K562 (cell line): ENCODE measurements at regions of chrX and their contacts with region 1.

Region 1: GRCh38 chrX:118839334-118839958 is 15.8 kb downstream of the ZCCHC12 start:
- DNase-seq: peak; percentile 72 to 80 (median 76)
- ATAC-seq: peak; percentile 97
- H3K4me3 ChIP-seq: peak overlapping the region; percentile 28
- H3K27ac ChIP-seq: no peak overlapping the region
- H3K4me1 ChIP-seq: peaks cover 0 to 7% of the 10 kb centered on the region in 2 experiments; a peak in 2 of 5 replicates
- H3K27me3 ChIP-seq: no peaks in the 10 kb centered on the region; a peak in 1 of 5 replicates
- CTCF ChIP-seq: peak; percentile 64 to 75 (median 73)
- EP300 ChIP-seq: no peak
- POLR2A ChIP-seq: no peak
- RAD21 ChIP-seq: peak; percentile 32 to 57

Region 2: GRCh38 chrX:119067023-119067739 is 227.7 kb after region 1 on chrX:
- CTCF ChIA-PET with region 1: interaction called, 10 read pairs
- POLR2A ChIA-PET with region 1: no interaction called
- in situ Hi-C with region 1: loop called (anchors 5 kb)
- intact Hi-C with region 1: no loop called
- DNase-seq: peak; percentile 53 to 63 (median 62)
- ATAC-seq: peak; percentile 83
- H3K4me3 ChIP-seq: no peak overlapping the region
- H3K27ac ChIP-seq: no peak overlapping the region
- H3K4me1 ChIP-seq: peaks cover 0 to 9% of the 10 kb centered on the region in 2 experiments; a peak in 3 of 5 replicates
- H3K27me3 ChIP-seq: peaks cover 0 to 4% of the 10 kb centered on the region in 2 experiments; a peak in 1 of 5 replicates
- CTCF ChIP-seq: peak; percentile 70 to 81 (median 78)
- EP300 ChIP-seq: no peak
- POLR2A ChIP-seq: no peak
- RAD21 ChIP-seq: peak; percentile 72 to 73

Region 3: DNA sequence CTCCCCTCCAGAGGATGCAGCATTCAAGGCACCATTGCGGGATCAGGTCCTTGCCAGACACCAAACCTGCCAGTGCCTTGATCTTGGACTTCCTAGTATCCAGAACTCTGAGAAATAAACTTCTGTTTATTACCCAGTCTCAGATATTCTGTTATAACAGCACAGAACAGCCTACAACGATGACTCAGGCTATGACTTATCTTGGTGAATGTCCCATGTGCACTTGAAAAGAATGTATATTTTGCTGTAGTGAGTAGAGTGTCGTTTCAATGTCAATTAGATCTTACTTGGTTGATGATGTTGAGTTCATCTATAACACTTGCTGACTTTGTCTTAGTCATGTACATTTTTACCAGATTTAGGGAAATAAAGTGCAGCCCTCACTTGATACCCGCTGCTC is 362.1 kb after region 1 on chrX:
- CTCF ChIA-PET with region 1: no interaction called
- POLR2A ChIA-PET with region 1: no interaction called
- in situ Hi-C with region 1: loop called (anchors 25 kb)
- intact Hi-C with region 1: no loop called
- DNase-seq: no peak
- ATAC-seq: no peak
- H3K4me3 ChIP-seq: no peak overlapping the region
- H3K27ac ChIP-seq: no peak overlapping the region
- H3K4me1 ChIP-seq: peaks cover 0 to 14% of the 10 kb centered on the region in 2 experiments; a peak in 3 of 5 replicates
- H3K27me3 ChIP-seq: no peaks in the 10 kb centered on the region; a peak in 1 of 5 replicates
- CTCF ChIP-seq: no peak
- EP300 ChIP-seq: no peak
- POLR2A ChIP-seq: no peak
- RAD21 ChIP-seq: no peak